MCF 10A (cell line): ENCODE measurements at regions of chr5 and their contacts with region 1.

Region 1: GRCh38 chr5:181181650-181182565 is 23.1 kb downstream of the TRIM7 start:
- DNase-seq: peak; percentile 89
- H3K4me3 Mint-ChIP-seq: peak overlapping the region; percentile 3
- H3K27ac Mint-ChIP-seq: no peak overlapping the region
- H3K4me1 Mint-ChIP-seq: peaks cover 12% of the 10 kb centered on the region
- H3K27me3 Mint-ChIP-seq: no peaks in the 10 kb centered on the region
- CTCF ChIP-seq: peak; percentile 95

Region 2: GRCh38 chr5:180135128-180135955 is 1046.6 kb before region 1 on chr5:
- CTCF ChIA-PET with region 1: no interaction called
- POLR2A ChIA-PET with region 1: no interaction called
- intact Hi-C with region 1: no loop called
- DNase-seq: peak; percentile 94
- H3K4me3 Mint-ChIP-seq: no peak overlapping the region
- H3K27ac Mint-ChIP-seq: no peak overlapping the region
- H3K4me1 Mint-ChIP-seq: peaks cover 9% of the 10 kb centered on the region
- H3K27me3 Mint-ChIP-seq: peaks cover 20% of the 10 kb centered on the region
- CTCF ChIP-seq: no peak

Region 3: DNA sequence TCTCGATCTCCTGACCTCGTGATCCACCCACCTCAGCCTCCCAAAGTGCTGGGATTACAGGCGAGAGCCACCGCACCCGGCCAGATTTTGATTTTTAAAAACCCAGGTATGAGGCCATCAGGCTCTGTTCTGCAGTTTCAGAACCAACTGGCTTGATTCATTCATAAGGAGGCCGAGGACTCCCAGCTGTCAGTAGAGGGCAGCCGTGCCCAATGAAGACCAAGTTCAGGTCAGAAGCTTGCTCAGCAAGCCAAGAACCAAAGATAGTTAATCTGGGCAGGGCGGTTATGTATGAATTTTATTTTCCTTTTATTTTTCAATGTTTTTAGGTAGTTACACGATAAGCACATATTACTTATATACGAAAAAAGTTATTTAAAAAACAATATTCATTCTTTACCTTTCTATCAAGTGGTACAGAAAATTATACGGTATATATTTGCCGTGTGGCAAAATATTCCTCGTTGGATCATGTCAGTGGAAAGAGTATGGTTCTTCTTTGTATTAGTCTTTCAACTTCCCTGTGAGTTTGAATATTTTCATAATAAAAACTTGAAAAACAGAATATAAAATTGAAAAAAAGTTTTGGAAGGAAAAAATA is 397.3 kb before region 1 on chr5:
- CTCF ChIA-PET with region 1: interaction called, 6 read pairs
- POLR2A ChIA-PET with region 1: no interaction called
- intact Hi-C with region 1: loop called (anchors 1 kb)
- DNase-seq: peak; percentile 88
- H3K4me3 Mint-ChIP-seq: no peak overlapping the region
- H3K27ac Mint-ChIP-seq: no peak overlapping the region
- H3K4me1 Mint-ChIP-seq: peaks cover 13% of the 10 kb centered on the region
- H3K27me3 Mint-ChIP-seq: no peaks in the 10 kb centered on the region
- CTCF ChIP-seq: peak; percentile 90

Region 4: GRCh38 chr5:180868960-180869359 is 312.9 kb before region 1 on chr5:
- CTCF ChIA-PET with region 1: interaction called, 5 read pairs
- POLR2A ChIA-PET with region 1: interaction called, 10 read pairs
- intact Hi-C with region 1: loop called (anchors 10 kb)
- DNase-seq: peak; percentile 91
- H3K4me3 Mint-ChIP-seq: no peak overlapping the region
- H3K27ac Mint-ChIP-seq: peak overlapping the region; percentile 87
- H3K4me1 Mint-ChIP-seq: peaks cover 29% of the 10 kb centered on the region
- H3K27me3 Mint-ChIP-seq: no peaks in the 10 kb centered on the region
- CTCF ChIP-seq: peak; percentile 94

Region 5: GRCh38 chr5:181167814-181168488 is 14.0 kb before region 1 on chr5:
- CTCF ChIA-PET with region 1: interaction called, 15 read pairs
- POLR2A ChIA-PET with region 1: interaction called, 34 read pairs
- intact Hi-C with region 1: no loop called
- DNase-seq: peak; percentile 54
- H3K4me3 Mint-ChIP-seq: no peak overlapping the region
- H3K27ac Mint-ChIP-seq: no peak overlapping the region
- H3K4me1 Mint-ChIP-seq: peaks cover 35% of the 10 kb centered on the region
- H3K27me3 Mint-ChIP-seq: no peaks in the 10 kb centered on the region
- CTCF ChIP-seq: peak; percentile 73

Region 6: GRCh38 chr5:181217111-181217802 is 35.3 kb after region 1 on chr5:
- CTCF ChIA-PET with region 1: interaction called, 4 read pairs
- POLR2A ChIA-PET with region 1: interaction called, 171 read pairs
- intact Hi-C with region 1: loop called (anchors 5 kb)
- DNase-seq: peak; percentile 80
- H3K4me3 Mint-ChIP-seq: peak overlapping the region; percentile 72
- H3K27ac Mint-ChIP-seq: peak overlapping the region; percentile 65
- H3K4me1 Mint-ChIP-seq: peaks cover 31% of the 10 kb centered on the region
- H3K27me3 Mint-ChIP-seq: no peaks in the 10 kb centered on the region
- CTCF ChIP-seq: no peak

Region 7: GRCh38 chr5:181243512-181244343 is 61.8 kb after region 1 on chr5 and contains the start of gene RACK1:
- CTCF ChIA-PET with region 1: interaction called, 5 read pairs
- POLR2A ChIA-PET with region 1: interaction called, 167 read pairs
- intact Hi-C with region 1: loop called (anchors 2 kb)
- DNase-seq: peak; percentile 96
- H3K4me3 Mint-ChIP-seq: peak within 1 kb of the TSS; percentile 99
- H3K27ac Mint-ChIP-seq: peak within 1 kb of the TSS; percentile 99
- H3K4me1 Mint-ChIP-seq: peaks cover 48% of the 10 kb centered on the region
- H3K27me3 Mint-ChIP-seq: no peaks in the 10 kb centered on the region
- CTCF ChIP-seq: no peak
- total RNA-seq, gene RACK1: 2,995 and 4,050 TPM in 2 replicates